Ascending aorta (tissue), 2 donors: ENCODE measurements at regions of chr12 and their contacts with region 1.

Region 1: DNA sequence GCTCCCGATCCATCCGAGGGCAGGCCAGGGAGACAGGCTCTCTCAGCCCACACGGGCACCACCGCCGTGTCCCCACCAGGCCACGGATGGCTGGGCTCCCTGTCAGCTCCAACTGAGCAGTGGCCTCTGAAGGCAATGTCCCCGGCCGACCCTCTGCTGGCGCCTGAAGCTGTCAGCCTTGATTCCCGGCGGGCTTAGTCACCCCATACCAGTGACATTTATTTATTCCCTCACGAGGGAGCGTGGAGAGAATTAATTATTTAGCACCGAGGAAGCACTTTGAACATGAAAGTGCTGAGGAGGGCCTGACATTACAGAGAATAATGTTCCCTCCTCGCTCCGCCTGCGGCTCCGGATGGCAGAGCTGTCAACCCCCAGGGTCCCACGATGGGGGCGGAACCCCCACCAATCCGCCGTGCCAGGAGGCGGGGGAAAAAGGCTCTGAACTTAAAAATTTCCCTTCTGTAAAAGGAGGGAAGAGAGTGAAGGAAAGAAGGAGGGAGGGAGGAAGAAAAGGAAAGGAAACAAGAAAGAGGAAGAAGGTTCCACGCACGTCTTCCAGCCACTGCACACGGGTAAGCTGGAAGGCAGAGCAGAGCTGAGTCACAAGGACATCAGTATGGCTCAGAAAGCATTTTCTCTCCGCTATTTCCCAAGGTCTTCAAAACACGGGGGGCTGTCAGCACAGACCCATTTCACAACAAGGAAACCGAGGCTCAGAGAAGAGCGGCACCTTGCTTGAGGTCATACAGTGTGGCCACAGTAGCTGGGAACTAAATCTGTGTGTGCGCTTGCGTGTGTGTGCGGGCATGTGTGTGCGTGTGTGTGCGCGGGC is 108.7 kb upstream of the NCOR2 start:
- DNase-seq: peak in 1 of 2 donors; percentile 84
- H3K4me3 ChIP-seq: peak overlapping the region; percentile 34 to 39
- H3K27ac ChIP-seq: peak overlapping the region; percentile 4 to 56
- H3K4me1 ChIP-seq: peaks cover 3 to 30% of the 10 kb centered on the region in 2 donors
- H3K27me3 ChIP-seq: no peaks in the 10 kb centered on the region
- CTCF ChIP-seq: no peak

Region 2: DNA sequence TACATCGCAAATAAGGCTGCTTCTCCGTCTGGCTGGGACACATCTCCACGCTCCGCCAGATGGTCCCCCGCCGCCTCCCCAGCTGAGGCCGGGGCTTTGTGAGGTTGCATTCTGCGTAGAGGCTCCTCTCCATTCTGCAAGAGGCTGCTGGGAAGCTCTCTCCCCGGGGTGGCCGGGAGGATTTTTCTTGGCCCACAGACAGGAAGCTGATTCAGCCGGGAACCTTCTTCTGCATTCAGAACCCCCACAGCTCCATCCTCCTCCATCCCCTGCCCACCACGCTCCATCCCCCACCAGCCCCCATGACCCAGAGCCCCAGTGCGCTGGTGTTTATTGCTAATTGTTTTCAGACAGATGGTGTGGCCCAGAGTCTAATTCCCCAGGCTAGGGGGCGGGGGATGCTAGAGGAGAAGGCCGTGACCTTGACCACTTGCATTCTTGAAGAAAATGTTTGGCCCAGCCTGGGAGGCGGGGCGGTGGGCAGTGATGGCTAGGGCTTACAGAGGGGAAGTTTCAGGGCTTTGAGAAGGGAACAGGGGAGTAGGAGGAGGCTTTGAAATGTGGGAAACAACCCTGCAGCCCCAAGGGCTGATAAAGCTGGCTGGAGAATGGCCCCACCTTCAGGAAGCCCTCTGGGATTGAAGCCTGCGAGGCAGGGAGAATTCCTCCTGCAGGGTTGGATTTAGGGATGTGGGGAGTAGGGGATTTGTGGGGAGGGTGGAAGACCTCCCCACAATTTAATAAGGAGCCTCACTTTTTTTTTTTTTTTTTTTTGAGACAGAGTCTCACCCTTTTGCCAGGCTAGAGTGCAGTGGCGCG is 20.2 kb before region 1 on chr12:
- intact Hi-C with region 1: no loop called
- DNase-seq: peak in 1 of 2 donors; percentile 90
- H3K4me3 ChIP-seq: peak overlapping the region; percentile 31 to 54
- H3K27ac ChIP-seq: peak overlapping the region; percentile 45 to 73
- H3K4me1 ChIP-seq: peaks cover 6 to 36% of the 10 kb centered on the region in 2 donors
- H3K27me3 ChIP-seq: no peaks in the 10 kb centered on the region
- CTCF ChIP-seq: no peak

Region 3: DNA sequence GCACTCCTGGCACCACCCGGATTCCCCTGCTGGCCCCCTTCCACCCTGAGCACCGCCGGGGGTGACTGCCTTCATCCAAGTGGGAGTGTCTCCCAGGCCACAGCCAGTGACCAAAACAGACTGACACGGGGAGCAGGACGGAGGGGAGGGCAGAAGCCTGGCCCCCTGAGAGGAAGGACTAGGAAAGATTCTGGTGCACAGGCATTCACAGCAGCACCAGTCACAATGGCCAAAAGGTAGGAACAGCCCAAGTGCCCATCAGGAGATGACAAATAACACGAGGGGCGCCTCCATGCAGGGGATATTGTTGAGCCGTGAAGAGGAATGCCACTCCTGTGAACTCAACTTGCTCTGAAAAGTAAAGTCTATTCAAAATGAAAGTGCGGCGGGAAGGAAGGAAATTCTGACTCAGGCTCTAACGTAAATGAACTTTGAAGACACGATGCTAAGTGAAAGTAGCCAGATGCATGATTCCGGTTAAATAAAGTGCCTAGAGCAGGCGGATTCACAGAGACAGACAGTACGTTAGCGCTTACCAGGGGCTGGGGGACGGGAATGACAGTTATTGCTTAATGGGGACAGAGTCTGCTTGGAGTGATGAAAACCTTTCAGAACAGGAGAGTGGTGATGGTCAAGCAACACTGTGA is 37.5 kb after region 1 on chr12:
- intact Hi-C with region 1: no loop called
- DNase-seq: peak in 1 of 2 donors; percentile 70
- H3K4me3 ChIP-seq: peak overlapping the region; percentile 4 to 48
- H3K27ac ChIP-seq: peak overlapping the region; percentile 65 to 72
- H3K4me1 ChIP-seq: peaks cover 0 to 5% of the 10 kb centered on the region in 2 donors
- H3K27me3 ChIP-seq: no peaks in the 10 kb centered on the region
- CTCF ChIP-seq: no peak

Region 4: DNA sequence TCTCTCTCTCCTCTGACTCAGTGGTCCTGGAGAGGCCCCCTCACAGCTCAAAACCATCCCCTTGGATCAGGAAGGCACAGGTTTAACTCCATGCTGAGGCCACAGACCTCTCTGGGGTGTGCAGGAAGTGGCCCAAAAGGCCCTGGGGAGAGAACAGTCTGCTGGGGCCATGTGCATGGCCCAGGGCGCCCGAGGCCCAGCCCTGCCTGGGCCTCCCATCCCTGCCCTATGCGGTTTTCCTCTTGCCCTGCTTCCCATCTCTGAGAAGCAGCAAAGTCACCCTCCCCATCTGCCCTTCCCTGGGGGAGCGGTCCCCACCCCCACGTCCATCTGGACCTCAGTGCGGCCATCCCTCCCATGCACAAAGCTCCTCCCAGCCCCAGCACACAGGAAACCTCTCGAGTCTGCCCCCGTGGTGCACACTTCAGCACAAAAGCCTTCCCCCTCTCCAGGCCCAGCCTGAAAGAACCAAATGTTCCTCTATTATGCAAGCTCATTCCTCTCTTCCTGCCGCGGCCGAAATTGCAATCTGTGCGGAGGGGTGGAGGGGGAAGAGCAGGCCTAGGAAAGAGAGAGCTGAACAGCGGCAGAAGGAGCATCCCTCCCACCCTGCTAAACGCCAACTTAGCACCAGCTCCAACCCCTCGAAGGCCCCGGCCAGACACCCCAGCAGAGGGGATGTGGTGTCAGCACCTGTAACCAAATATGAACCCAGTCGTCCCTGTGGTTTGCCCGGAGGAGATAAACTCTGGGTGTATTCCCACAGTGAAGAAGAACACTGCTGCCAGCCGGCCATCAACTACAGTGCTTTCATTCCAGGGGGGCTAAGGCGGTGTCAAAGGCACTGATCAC is 79.1 kb after region 1 on chr12:
- intact Hi-C with region 1: loop called (anchors 5 kb)
- DNase-seq: peak; percentile 78 to 89
- H3K4me3 ChIP-seq: no peak overlapping the region
- H3K27ac ChIP-seq: peak overlapping the region; percentile 46 to 50
- H3K4me1 ChIP-seq: peaks cover 3 to 36% of the 10 kb centered on the region in 2 donors
- H3K27me3 ChIP-seq: no peaks in the 10 kb centered on the region
- CTCF ChIP-seq: no peak